ENCODE measurements at regions of chr15 and their contacts with region 1.

Region 1: GRCh38 chr15:43105778-43106485 is at the start of gene UBR1:
- DNase-seq: peak; percentile 95
- H3K4me3 Mint-ChIP-seq: peak within 1 kb of the TSS; percentile 89
- H3K27ac Mint-ChIP-seq: peak within 1 kb of the TSS; percentile 95
- H3K4me1 Mint-ChIP-seq: peaks cover 39% of the 10 kb centered on the region
- H3K27me3 Mint-ChIP-seq: no peaks in the 10 kb centered on the region
- total RNA-seq, gene UBR1: 24.5 to 29.7 TPM

Region 2: GRCh38 chr15:43008150-43008549 is 97.8 kb before region 1 on chr15:
- CTCF ChIA-PET with region 1: no interaction called
- POLR2A ChIA-PET with region 1: no interaction called
- intact Hi-C with region 1: no loop called
- DNase-seq: no peak
- H3K4me3 Mint-ChIP-seq: no peak overlapping the region
- H3K27ac Mint-ChIP-seq: no peak overlapping the region
- H3K4me1 Mint-ChIP-seq: no peaks in the 10 kb centered on the region
- H3K27me3 Mint-ChIP-seq: no peaks in the 10 kb centered on the region

Region 3: GRCh38 chr15:43121863-43122262 is 15.9 kb after region 1 on chr15:
- CTCF ChIA-PET with region 1: interaction called, 3 read pairs
- POLR2A ChIA-PET with region 1: interaction called, 10 read pairs
- intact Hi-C with region 1: loop called (anchors 1 kb)
- DNase-seq: no peak
- H3K4me3 Mint-ChIP-seq: peak overlapping the region; percentile 81
- H3K27ac Mint-ChIP-seq: no peak overlapping the region
- H3K4me1 Mint-ChIP-seq: peaks cover 12% of the 10 kb centered on the region
- H3K27me3 Mint-ChIP-seq: peaks cover 4% of the 10 kb centered on the region

Region 4: DNA sequence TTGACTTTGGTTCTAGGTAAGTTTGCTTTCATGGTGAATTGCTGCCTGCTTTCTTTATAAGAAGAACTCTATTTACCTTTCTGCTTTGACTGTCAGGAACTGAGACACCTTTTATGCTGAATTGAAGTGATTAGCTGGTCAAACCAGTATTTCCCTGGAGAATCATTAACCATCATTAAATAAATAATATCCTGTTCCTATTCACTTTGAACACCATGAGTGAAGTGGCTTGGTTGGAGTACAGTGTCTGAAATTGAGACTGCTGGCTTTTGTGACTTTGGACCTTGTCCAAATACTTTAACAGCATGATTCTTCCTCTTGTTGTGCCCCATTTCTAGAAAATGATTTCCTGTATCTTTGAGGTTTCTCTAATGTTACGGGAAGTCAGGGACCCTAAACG is 21.8 kb after region 1 on chr15:
- CTCF ChIA-PET with region 1: interaction called, 3 read pairs
- POLR2A ChIA-PET with region 1: interaction called, 10 read pairs
- intact Hi-C with region 1: loop called (anchors 1 kb)
- DNase-seq: no peak
- H3K4me3 Mint-ChIP-seq: no peak overlapping the region
- H3K27ac Mint-ChIP-seq: no peak overlapping the region
- H3K4me1 Mint-ChIP-seq: peaks cover 8% of the 10 kb centered on the region
- H3K27me3 Mint-ChIP-seq: peaks cover 6% of the 10 kb centered on the region

Region 5: GRCh38 chr15:43133430-43134156 is 27.7 kb after region 1 on chr15 and contains the start of gene TMEM62:
- CTCF ChIA-PET with region 1: no interaction called
- POLR2A ChIA-PET with region 1: no interaction called
- intact Hi-C with region 1: loop called (anchors 1 kb)
- DNase-seq: peak; percentile 83
- H3K4me3 Mint-ChIP-seq: peak within 1 kb of the TSS; percentile 84
- H3K27ac Mint-ChIP-seq: peak within 1 kb of the TSS; percentile 74
- H3K4me1 Mint-ChIP-seq: peaks cover 16% of the 10 kb centered on the region
- H3K27me3 Mint-ChIP-seq: peaks cover 4% of the 10 kb centered on the region
- total RNA-seq, gene TMEM62: 11.3 to 12.7 TPM

Region 6: DNA sequence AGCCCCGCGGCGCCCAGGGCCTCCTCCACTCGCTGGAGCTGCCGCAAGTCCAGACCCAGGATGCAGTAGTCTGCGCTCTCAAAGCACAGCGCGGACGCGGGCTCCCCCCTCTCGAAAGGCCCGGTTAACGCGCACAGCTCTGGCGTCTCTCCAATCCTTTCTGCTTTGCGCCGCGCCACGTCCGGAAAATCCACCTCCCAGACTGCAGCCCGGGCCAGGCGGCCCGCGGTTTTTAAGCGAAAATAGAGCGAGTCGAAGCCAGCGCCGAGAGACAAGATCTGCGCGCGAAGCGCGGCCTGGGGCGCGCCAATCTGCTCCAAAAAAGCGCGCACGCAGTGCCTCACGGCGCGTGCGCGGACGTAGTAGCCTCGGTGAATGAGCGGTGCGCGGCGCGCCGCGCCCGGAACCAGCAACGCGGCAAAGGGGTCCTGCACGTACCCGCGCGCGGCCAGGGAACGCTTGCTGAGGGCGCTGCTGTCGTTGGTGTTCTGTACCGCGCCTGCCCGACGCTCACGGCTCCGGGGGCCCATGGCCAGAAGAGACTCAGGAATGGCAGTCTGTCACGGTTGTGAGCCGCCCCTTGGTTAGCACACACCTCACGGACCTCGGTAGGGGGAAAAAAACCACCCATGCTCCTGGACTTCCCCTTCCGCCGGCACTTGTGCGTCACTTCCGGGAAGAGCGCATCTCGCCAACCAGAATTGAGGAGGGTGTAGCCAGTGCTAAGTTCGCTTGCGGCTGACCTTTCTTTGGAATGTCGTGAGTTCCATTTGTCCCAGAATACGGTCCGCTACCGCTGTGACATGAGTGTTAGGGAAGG is 224.2 kb after region 1 on chr15 and contains the start of gene LCMT2:
- CTCF ChIA-PET with region 1: no interaction called
- POLR2A ChIA-PET with region 1: no interaction called
- intact Hi-C with region 1: loop called (anchors 5 kb)
- DNase-seq: peak; percentile 94
- H3K4me3 Mint-ChIP-seq: peak within 1 kb of the TSS; percentile 92
- H3K27ac Mint-ChIP-seq: peak within 1 kb of the TSS; percentile 99
- H3K4me1 Mint-ChIP-seq: peaks cover 41% of the 10 kb centered on the region
- H3K27me3 Mint-ChIP-seq: no peaks in the 10 kb centered on the region
- total RNA-seq, gene LCMT2: 7.7 to 9.1 TPM

Measured in activated CD4-positive, alpha-beta memory T cell treated with anti-CD3 and anti-CD28 coated beads for 36 hours (primary cell).